Activated CD8-positive, alpha-beta memory T cell treated with anti-CD3 and anti-CD28 coated beads, Interleukin-2, amount 10 ng/mL, durations not matched to agents 7 days and 5 days (primary cell): ENCODE measurements at regions of chr2 and their contacts with region 1.

Region 1: DNA sequence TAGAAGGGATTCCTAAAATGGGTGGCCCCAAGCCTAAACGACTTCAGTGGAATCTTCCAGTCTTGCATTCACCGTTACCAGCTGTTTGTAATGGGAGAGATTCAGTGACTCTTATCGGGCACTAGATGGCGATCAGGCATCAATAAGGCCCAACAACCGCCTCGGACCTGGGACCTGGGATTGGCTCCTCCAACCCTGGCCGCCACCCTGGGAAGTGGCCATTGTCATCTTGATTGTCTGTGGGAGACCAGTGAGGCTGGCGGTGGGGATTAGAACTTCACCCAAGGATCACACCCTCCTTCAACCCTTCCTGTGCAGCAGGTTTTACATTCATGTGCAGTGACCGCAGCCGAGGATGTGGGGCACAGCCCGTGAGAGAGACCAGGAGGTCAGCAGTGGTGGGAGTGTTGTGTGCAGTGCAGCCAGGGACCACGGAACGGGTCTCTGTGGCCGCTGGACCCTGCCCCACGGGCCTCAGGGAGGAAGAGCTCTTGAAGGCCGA is 85.3 kb downstream of the SPP2 start:
- DNase-seq: peak; percentile 77
- ATAC-seq: peak; percentile 90
- H3K4me3 Mint-ChIP-seq: no peak overlapping the region
- H3K27ac Mint-ChIP-seq: peak overlapping the region; percentile 48
- H3K4me1 Mint-ChIP-seq: peaks cover 22% of the 10 kb centered on the region
- H3K27me3 Mint-ChIP-seq: peaks cover 3% of the 10 kb centered on the region

Region 2: GRCh38 chr2:234146087-234146826 is 10.5 kb after region 1 on chr2:
- CTCF ChIA-PET with region 1: interaction called, 21 read pairs
- DNase-seq: no peak
- ATAC-seq: no peak
- H3K4me3 Mint-ChIP-seq: peak overlapping the region; percentile 12
- H3K27ac Mint-ChIP-seq: peak overlapping the region; percentile 75
- H3K4me1 Mint-ChIP-seq: peaks cover 26% of the 10 kb centered on the region
- H3K27me3 Mint-ChIP-seq: no peaks in the 10 kb centered on the region

Region 3: GRCh38 chr2:234500394-234501006 is 364.7 kb after region 1 on chr2:
- CTCF ChIA-PET with region 1: interaction called, 79 read pairs
- DNase-seq: peak; percentile 86
- ATAC-seq: peak; percentile 52
- H3K4me3 Mint-ChIP-seq: no peak overlapping the region
- H3K27ac Mint-ChIP-seq: peak overlapping the region; percentile 23
- H3K4me1 Mint-ChIP-seq: peaks cover 31% of the 10 kb centered on the region
- H3K27me3 Mint-ChIP-seq: peaks cover 13% of the 10 kb centered on the region

Region 4: DNA sequence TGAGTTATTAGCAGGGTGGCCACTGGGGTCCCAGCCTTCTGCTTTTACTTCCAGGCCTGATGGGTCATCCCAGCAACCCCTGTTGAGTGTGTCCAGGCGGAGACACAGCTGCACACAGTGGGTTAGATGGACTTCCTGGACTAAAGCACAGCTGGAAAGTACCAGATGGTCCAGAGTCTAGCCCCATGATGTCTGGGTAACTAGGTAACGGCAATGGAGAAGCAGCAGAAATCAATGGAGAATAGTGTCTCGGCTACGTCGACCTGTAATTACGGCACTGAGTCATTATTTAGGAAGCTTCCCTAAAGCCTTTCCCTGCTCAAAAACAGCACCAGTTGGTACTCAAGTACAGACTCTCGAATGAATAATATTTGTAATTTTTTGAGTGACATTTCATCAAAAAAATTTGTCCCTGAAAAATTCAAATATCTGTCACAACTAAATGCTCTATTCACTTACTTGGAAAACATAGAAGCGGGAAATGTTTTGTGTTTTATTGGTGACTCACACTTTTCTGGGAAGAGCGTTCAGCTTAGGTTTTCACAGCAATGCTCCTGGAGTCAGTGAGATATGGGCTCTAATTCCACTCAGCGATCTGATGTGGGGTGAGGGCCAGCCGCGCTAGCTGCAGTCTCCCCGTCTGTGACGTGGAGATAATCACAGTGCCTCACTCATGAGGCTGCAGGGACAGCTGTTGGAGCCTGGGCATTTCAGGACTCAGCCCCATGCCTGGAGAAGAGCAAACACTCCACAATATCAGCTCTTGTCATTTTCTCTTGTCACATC is 377.3 kb after region 1 on chr2:
- CTCF ChIA-PET with region 1: interaction called, 11 read pairs
- DNase-seq: no peak
- ATAC-seq: no peak
- H3K4me3 Mint-ChIP-seq: no peak overlapping the region
- H3K27ac Mint-ChIP-seq: no peak overlapping the region
- H3K4me1 Mint-ChIP-seq: no peaks in the 10 kb centered on the region
- H3K27me3 Mint-ChIP-seq: peaks cover 13% of the 10 kb centered on the region

Region 5: DNA sequence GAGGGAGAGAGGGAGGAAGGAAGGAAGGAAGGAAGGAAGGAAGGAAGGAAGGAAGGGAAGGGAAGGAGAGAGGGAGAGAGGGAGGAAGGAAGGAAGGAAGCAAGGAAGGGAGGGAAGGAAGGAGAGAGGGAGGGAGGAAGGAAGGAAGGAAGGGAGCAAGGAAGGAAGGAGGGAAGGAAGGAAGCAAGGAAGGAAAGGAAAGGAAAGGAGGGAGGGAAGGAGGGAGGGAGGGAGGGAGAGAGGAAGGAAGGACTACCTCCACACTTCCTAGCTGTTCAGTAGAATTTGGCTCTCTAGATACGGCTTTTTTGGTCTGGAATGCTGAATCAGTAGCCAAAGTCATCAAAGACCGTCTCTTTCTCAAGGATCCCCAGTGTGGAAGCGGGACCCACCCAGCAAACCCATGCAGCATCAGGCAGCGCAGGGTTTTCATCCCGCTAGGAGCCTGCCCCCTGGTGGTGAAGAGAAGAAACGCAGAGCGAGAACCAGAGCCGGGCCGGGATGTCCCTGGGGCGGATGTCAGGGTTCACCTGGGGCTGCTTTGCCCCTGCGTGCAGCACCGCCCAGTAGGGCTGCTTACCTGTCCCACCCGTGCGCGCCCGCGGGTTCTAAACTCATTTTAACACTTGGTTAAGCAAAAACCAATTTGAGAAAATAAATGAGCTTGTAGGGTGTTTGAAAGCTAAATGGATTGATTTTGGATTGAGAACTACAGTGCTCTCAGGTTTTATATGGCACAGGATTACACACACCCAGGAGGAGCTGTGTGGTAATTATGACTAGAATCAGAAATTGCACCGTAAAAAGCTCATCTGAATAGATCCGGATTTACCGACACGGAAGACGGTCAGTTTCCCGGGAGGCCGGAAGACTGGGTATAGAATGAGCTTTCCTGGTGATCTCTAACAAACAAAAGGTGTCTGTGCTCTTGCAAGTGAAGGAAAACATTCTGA is 409.2 kb after region 1 on chr2:
- CTCF ChIA-PET with region 1: interaction called, 45 read pairs
- DNase-seq: peak; percentile 85
- ATAC-seq: peak; percentile 95
- H3K4me3 Mint-ChIP-seq: no peak overlapping the region
- H3K27ac Mint-ChIP-seq: no peak overlapping the region
- H3K4me1 Mint-ChIP-seq: no peaks in the 10 kb centered on the region
- H3K27me3 Mint-ChIP-seq: peaks cover 26% of the 10 kb centered on the region